Activated B cell treated with CpG ODN at 0.5 μM for 24 hours (primary cell): ENCODE measurements at regions of chr7 and their contacts with region 1.

Region 1: DNA sequence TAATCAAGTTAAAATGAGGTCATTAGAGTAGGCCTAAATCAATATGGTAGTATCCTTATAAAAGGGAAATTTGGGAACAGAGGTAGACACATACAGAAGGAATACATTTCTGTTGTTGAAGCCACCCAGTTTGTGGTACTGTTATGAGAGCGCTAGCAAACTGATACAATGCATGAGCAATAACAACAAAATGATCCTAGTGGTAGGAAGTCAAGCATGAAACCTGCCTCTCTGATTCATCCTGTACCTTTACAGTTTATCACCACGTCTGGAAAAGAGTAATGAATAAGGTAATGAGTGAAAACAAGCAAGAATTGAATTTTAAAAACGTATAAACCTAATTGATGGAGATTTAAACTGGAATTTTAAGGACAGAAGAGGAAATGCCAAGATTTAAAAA is 217.2 kb downstream of the PCLO start:
- DNase-seq: no peak
- ATAC-seq: no peak
- H3K4me3 Mint-ChIP-seq: no peak overlapping the region
- H3K27ac Mint-ChIP-seq: no peak overlapping the region
- H3K4me1 Mint-ChIP-seq: no peaks in the 10 kb centered on the region
- H3K27me3 Mint-ChIP-seq: no peaks in the 10 kb centered on the region
- CTCF ChIP-seq: no peak

Region 2: GRCh38 chr7:82729172-82730030 is 216.1 kb before region 1 on chr7:
- CTCF ChIA-PET with region 1: no interaction called
- POLR2A ChIA-PET with region 1: no interaction called
- intact Hi-C with region 1: no loop called
- DNase-seq: no peak
- ATAC-seq: no peak
- H3K4me3 Mint-ChIP-seq: no peak overlapping the region
- H3K27ac Mint-ChIP-seq: no peak overlapping the region
- H3K4me1 Mint-ChIP-seq: no peaks in the 10 kb centered on the region
- H3K27me3 Mint-ChIP-seq: no peaks in the 10 kb centered on the region
- CTCF ChIP-seq: no peak

Region 3: GRCh38 chr7:82789867-82790609 is 155.4 kb before region 1 on chr7:
- CTCF ChIA-PET with region 1: no interaction called
- POLR2A ChIA-PET with region 1: no interaction called
- intact Hi-C with region 1: no loop called
- DNase-seq: no peak
- ATAC-seq: no peak
- H3K4me3 Mint-ChIP-seq: no peak overlapping the region
- H3K27ac Mint-ChIP-seq: no peak overlapping the region
- H3K4me1 Mint-ChIP-seq: no peaks in the 10 kb centered on the region
- H3K27me3 Mint-ChIP-seq: no peaks in the 10 kb centered on the region
- CTCF ChIP-seq: no peak

Region 4: GRCh38 chr7:84663224-84663623 is 1717.7 kb after region 1 on chr7:
- CTCF ChIA-PET with region 1: no interaction called
- POLR2A ChIA-PET with region 1: no interaction called
- intact Hi-C with region 1: loop called (anchors 5 kb)
- DNase-seq: no peak
- ATAC-seq: no peak
- H3K4me3 Mint-ChIP-seq: no peak overlapping the region
- H3K27ac Mint-ChIP-seq: no peak overlapping the region
- H3K4me1 Mint-ChIP-seq: no peaks in the 10 kb centered on the region
- H3K27me3 Mint-ChIP-seq: no peaks in the 10 kb centered on the region
- CTCF ChIP-seq: no peak